PC-9 (cell line): ENCODE measurements at regions of chr13 and their contacts with region 1.

Region 1: DNA sequence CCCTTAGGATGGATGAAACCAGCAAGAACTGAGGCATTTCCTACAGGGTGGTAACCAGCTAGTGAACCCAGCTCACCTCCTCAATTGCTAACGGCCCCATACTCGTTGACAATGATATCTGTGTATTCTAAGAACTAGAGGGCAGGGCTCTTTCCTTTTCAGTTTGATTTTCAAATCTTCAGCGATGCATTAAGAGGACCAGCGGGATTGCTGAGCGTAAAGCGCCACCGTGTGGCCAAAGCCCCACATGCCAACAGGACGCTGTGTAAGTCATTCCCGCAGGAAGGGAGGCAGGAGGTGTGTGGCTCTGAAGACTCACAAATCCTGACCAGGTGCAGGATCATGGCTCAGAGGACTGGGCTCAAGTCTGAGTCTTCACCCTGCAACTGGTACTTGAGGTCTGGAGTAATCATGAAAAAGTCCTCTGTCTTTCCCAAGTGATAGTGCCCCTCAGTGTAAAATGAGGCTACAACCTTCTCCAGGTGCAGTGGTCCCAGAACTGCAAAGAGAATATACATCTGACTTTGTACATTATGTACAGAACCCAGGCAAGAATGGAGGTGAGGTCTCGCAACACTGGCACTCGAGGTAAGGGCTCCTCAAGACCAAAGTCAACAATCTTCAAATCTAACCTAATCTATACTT is 40.9 kb downstream of the C13orf42 start:
- DNase-seq: peak; percentile 64 to 79
- H3K4me3 ChIP-seq: no peak overlapping the region
- H3K27ac ChIP-seq: no peak overlapping the region
- H3K4me1 ChIP-seq: no peaks in the 10 kb centered on the region
- H3K27me3 ChIP-seq: no peaks in the 10 kb centered on the region; the same call in 1 of the 2 replicates
- CTCF ChIP-seq: peak; percentile 91

Region 2: GRCh38 chr13:49669735-49670309 is 1400.3 kb before region 1 on chr13:
- CTCF ChIA-PET with region 1: no interaction called
- POLR2A ChIA-PET with region 1: no interaction called
- intact Hi-C with region 1: loop called (anchors 1 kb)
- DNase-seq: peak in 1 of 2 experiments; percentile 48
- H3K4me3 ChIP-seq: no peak overlapping the region
- H3K27ac ChIP-seq: no peak overlapping the region
- H3K4me1 ChIP-seq: no peaks in the 10 kb centered on the region
- H3K27me3 ChIP-seq: no peaks in the 10 kb centered on the region
- CTCF ChIP-seq: peak; percentile 75

Region 3: DNA sequence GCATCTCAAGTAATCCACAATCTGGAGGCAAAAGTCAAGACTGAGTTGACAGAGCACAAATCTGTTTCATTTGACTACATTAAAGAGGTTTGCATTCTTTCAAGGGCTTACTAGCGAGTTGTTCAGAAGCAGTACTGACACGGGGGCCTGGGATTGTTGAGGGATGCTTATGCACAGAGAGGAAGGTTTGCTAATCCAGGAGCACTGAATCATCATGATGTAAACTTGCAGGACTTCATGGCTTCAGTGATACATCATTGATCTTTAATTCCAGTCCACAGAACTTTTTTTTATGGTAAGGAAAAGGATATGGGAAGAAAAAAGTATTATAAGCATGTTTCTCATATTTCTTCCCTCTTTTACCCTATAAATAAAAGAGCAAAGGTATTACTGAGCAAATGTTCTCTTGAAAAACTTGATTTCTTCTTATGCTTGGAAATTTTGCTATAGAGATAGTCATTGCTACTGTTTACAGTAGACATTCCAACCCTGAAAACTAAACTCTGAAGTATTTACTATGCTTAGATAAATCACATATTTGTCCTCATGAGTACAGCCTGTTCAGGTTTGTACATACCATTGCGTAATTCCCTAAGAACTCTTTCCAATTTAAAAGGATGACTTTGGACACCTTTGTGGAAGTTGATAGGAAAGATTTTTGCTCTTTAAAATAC is 1211.8 kb before region 1 on chr13:
- CTCF ChIA-PET with region 1: no interaction called
- POLR2A ChIA-PET with region 1: no interaction called
- intact Hi-C with region 1: loop called (anchors 2 kb)
- DNase-seq: peak; percentile 61 to 96
- H3K4me3 ChIP-seq: peak overlapping the region; percentile 55
- H3K27ac ChIP-seq: peak overlapping the region; percentile 98
- H3K4me1 ChIP-seq: peaks cover 33% of the 10 kb centered on the region
- H3K27me3 ChIP-seq: no peaks in the 10 kb centered on the region
- CTCF ChIP-seq: no peak

Region 4: GRCh38 chr13:49976314-49977258 is 1093.5 kb before region 1 on chr13:
- CTCF ChIA-PET with region 1: interaction called, 4 read pairs
- POLR2A ChIA-PET with region 1: no interaction called
- intact Hi-C with region 1: loop called (anchors 1 kb)
- DNase-seq: peak; percentile 58
- H3K4me3 ChIP-seq: no peak overlapping the region
- H3K27ac ChIP-seq: no peak overlapping the region
- H3K4me1 ChIP-seq: no peaks in the 10 kb centered on the region
- H3K27me3 ChIP-seq: no peaks in the 10 kb centered on the region
- CTCF ChIP-seq: peak; percentile 94

Region 5: GRCh38 chr13:50676602-50677001 is 393.5 kb before region 1 on chr13:
- CTCF ChIA-PET with region 1: no interaction called
- POLR2A ChIA-PET with region 1: no interaction called
- intact Hi-C with region 1: no loop called
- DNase-seq: peak; percentile 57 to 95
- H3K4me3 ChIP-seq: no peak overlapping the region
- H3K27ac ChIP-seq: peak overlapping the region; percentile 90
- H3K4me1 ChIP-seq: peaks cover 77% of the 10 kb centered on the region
- H3K27me3 ChIP-seq: no peaks in the 10 kb centered on the region
- CTCF ChIP-seq: no peak

Region 6: DNA sequence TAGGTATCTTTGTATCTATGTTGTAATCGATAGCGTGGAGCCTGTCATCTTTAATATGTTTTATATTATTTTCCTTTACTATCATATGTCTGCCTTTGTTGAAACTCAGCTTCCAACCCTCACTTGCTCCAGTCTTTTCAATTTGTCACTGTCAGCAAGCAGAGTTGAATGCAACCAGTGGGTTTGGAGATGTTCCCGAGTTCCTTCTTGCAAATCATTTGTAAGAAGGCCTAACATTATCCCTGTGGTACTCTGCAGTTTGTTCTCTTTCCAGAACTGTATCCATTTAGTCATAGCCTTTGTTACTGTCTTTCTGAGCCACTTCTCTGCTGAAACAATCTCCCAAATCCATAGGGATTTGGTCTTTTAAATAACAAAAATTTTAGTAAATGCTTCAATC is 118.8 kb before region 1 on chr13:
- CTCF ChIA-PET with region 1: no interaction called
- POLR2A ChIA-PET with region 1: no interaction called
- intact Hi-C with region 1: no loop called
- DNase-seq: no peak
- H3K4me3 ChIP-seq: no peak overlapping the region
- H3K27ac ChIP-seq: no peak overlapping the region
- H3K4me1 ChIP-seq: no peaks in the 10 kb centered on the region
- H3K27me3 ChIP-seq: no peaks in the 10 kb centered on the region
- CTCF ChIP-seq: no peak

Region 7: GRCh38 chr13:51111997-51112396 is 41.9 kb after region 1 on chr13:
- CTCF ChIA-PET with region 1: no interaction called
- POLR2A ChIA-PET with region 1: no interaction called
- intact Hi-C with region 1: no loop called
- DNase-seq: no peak
- H3K4me3 ChIP-seq: no peak overlapping the region
- H3K27ac ChIP-seq: no peak overlapping the region
- H3K4me1 ChIP-seq: no peaks in the 10 kb centered on the region
- H3K27me3 ChIP-seq: peaks cover 76% of the 10 kb centered on the region
- CTCF ChIP-seq: no peak